Mucosa of descending colon (tissue), 3 donors: ENCODE measurements at regions of chr4 and their contacts with region 1.

Region 1: DNA sequence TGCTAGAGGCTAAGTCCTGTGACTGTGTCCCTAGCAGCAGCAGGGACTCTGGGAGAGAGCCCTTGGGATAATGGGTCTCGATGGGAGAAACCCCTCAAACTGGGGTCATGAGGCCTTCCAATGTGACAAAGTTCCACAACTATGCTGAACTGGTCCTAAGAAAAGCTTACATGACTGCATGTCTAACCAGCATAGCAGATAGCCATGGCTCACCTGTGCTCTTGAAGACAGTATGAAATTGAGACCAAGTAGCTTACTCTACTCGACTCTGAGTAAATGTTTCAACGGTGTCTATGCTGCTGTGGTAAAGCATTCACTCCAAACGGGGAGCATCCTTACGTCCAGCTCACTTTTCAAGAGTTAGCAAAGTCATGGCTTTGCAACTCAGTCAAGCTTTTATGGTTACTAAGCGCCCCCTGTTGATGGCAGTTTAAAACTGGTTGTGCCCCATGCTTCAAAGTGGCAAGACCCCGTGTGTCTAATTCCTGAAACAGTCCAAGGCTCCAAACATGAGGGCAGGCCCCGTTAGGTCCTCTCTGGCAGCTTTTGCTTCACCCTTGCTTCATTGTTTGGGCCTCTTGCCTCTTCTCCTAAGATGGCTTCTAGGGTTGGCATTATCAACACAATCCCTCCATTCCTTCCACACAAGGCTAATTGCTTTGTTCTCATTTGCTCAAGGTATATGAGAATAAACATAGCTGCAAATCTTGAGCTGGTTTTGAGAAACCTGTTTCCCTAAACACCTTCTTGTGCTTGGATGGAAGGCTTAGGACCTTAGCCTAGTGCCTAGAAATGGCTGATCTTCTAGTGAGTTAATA is 46.6 kb downstream of the CCNG2 start:
- DNase-seq: peak in 2 of 3 donors; percentile 29 to 80
- ATAC-seq: peak; percentile 67
- H3K4me3 ChIP-seq: no peak overlapping the region
- H3K4me1 ChIP-seq: no peaks in the 10 kb centered on the region
- CTCF ChIP-seq: peak; percentile 24

Region 2: DNA sequence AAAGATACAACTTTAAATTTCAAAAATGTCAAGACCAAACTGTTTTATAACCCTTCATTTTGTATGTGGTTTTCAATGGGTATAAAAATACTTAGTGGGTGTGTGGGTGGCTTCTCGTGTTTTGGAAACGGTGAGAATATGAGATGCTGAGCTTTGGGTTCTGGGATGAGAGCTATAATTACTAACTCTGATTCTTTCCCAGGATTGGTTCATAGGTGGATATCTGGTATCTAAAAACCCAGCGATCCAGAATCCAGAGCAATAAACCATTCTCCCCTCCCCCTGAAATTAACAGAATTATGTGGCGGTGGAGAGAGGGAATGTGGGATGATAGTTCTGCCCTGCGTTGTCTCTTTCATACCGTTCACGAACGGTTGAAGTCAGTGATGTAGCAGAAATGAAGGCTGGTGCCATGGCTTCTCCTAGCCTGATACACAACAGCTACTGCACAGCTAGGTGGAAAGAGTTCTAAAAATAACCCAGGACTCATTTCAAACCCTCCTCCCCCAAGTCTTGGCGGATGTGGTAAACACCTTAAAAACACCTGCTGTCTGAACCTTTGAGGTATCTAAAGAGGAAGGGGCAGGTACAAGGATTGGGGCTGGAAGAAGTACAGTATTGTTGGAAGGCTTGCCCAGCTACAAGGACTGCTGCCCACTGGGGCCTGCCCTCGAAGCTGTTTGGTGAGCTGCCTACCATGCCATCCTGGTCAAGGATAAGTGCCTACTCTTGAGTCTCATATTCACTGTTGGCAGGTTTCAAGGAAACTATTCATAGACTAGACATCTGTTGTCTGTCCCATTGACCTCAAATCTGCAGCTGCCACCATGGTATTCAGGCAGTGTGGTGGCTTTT is 209.6 kb before region 1 on chr4:
- intact Hi-C with region 1: no loop called
- DNase-seq: peak in 1 of 3 donors; percentile 47
- ATAC-seq: peak; percentile 46
- H3K4me3 ChIP-seq: no peak overlapping the region
- H3K4me1 ChIP-seq: peaks cover 5% of the 10 kb centered on the region
- CTCF ChIP-seq: no peak

Region 3: DNA sequence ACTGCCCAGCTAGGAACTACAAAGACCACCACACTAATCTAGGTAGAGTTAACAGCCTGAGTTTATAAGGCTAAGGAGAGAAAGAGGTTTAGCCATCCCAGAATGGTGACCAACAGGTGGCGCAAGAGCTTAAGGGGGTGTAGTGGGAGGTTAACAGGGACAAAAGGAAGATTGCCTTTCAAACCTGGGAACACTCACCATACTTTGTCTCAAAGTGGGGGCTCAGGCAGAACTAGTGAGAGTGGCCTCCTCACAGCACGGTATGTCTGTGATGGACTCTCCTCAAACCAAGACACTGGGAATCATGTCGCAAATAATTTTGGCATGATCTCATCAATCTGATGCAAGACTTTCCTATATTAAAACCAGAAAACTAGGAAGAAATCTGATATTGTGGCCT is 151.2 kb before region 1 on chr4:
- intact Hi-C with region 1: loop called in 1 of 2 experiments (anchors 5 kb)
- DNase-seq: peak in 2 of 3 donors; percentile 67 to 80
- ATAC-seq: peak; percentile 76
- H3K4me3 ChIP-seq: no peak overlapping the region
- H3K4me1 ChIP-seq: no peaks in the 10 kb centered on the region
- CTCF ChIP-seq: peak; percentile 47

Region 4: GRCh38 chr4:77095101-77095821 is 108.3 kb before region 1 on chr4:
- intact Hi-C with region 1: loop called (anchors 2 to 10 kb)
- DNase-seq: peak; percentile 69 to 90 (median 76)
- ATAC-seq: peak; percentile 97
- H3K4me3 ChIP-seq: no peak overlapping the region
- H3K4me1 ChIP-seq: no peaks in the 10 kb centered on the region
- CTCF ChIP-seq: peak; percentile 81

Region 5: GRCh38 chr4:77443941-77444340 is 240.4 kb after region 1 on chr4:
- intact Hi-C with region 1: no loop called
- DNase-seq: no peak
- ATAC-seq: no peak
- H3K4me3 ChIP-seq: no peak overlapping the region
- H3K4me1 ChIP-seq: no peaks in the 10 kb centered on the region
- CTCF ChIP-seq: no peak